ENCODE measurements at regions of chr16 and their contacts with region 1.

Region 1: GRCh38 chr16:180938-181667 is 844 bp downstream of the HBQ1 start:
- DNase-seq: peak; percentile 68
- ATAC-seq: peak; percentile 73
- H3K4me3 ChIP-seq: peak overlapping the region; percentile 42
- H3K27ac ChIP-seq: no peak overlapping the region
- H3K4me1 ChIP-seq: peaks cover 5% of the 10 kb centered on the region; the same call in 1 of the 2 replicates
- H3K27me3 ChIP-seq: peaks cover 10% of the 10 kb centered on the region
- CTCF ChIP-seq: peak; percentile 83

Region 2: DNA sequence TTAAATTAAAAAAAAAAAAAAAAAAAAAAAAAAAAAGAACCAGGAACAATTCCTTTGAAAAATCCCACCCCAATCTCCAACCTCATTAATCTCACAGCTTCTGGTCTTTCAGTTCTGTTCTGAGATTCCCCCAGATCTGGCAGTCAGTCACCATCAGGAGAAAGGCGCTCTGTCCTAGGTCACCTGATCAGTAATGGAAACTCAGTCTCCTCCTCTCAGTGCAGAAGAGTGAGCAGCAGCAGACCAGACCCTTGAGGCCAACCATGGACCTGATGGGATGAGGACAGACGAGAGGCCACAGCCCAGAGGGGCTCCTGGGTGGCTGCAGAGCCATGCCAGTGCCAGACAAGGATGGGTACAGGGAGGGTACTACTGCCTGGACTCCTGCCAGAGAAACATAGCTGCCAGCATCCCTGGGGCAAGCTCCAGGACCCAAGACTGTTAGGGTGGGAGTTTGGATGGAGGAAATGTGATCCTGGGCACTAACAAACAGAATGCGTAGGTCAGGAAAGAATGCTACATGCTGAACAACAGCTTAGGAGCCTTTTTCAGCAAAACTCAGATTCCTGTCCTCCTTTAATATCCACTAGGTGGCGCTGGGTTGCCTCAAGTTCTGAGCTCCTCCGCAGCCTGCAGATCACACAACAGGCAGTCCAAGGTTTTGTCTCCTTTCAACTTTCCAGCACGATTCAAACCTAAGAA is 74.3 kb before region 1 on chr16:
- CTCF ChIA-PET with region 1: interaction called, 3 read pairs
- POLR2A ChIA-PET with region 1: no interaction called
- intact Hi-C with region 1: loop called (anchors 2 kb)
- DNase-seq: peak; percentile 67
- ATAC-seq: peak; percentile 73
- H3K4me3 ChIP-seq: no peak overlapping the region
- H3K27ac ChIP-seq: no peak overlapping the region
- H3K4me1 ChIP-seq: peaks cover 6% of the 10 kb centered on the region; the same call in 1 of the 2 replicates
- H3K27me3 ChIP-seq: no peaks in the 10 kb centered on the region
- CTCF ChIP-seq: peak; percentile 71

Measured in PC-3 (cell line).